Activated B cell treated with CpG ODN at 0.5 μM for 24 hours (primary cell): ENCODE measurements at regions of chr20 and their contacts with region 1.

Region 1: DNA sequence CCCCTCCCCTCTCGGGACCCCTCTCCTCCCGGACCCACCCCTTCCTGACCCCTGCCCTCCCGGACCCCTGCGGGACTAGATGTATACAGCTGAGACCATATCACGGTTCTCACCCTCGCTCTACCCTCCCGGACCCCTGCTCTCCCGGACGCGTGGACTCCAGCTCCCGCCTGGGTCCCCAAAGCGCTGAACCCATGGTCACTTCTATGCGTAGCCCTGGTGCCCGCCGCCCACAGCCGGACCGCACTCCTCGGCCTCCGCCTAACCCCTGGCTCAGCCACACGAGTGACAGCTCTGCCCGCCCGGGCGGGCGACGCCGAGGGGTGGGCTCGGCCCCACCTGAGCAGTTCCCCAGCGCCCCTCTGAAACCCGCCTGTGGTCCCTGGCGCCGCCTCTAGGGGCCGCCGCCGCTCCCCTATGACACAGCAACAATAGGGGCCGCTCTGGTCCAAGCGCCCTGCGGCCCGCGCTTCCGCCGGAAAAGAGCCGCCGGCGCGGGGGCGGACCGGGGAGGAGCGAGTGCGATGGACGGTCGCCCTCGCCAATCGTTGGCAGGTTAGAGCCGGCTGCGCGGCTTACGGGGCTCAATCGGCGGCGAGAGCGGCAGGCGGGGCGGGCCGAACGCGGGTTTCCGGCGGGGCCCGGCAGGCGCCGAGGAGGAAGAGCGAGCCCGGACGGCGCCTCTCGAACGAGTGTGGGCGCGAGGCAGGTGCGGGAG is at the start of gene ADRM1:
- DNase-seq: peak; percentile 99
- ATAC-seq: peak; percentile 86
- H3K4me3 Mint-ChIP-seq: peak within 1 kb of the TSS; percentile 92
- H3K27ac Mint-ChIP-seq: peak within 1 kb of the TSS; percentile 96
- H3K4me1 Mint-ChIP-seq: peaks cover 30% of the 10 kb centered on the region
- H3K27me3 Mint-ChIP-seq: no peaks in the 10 kb centered on the region
- CTCF ChIP-seq: peak; percentile 32
- total RNA-seq, gene ADRM1: 97.9 and 98.0 TPM in 2 replicates

Region 2: GRCh38 chr20:62065669-62066338 is 236.7 kb before region 1 on chr20 and contains the start of gene TAF4:
- CTCF ChIA-PET with region 1: no interaction called
- POLR2A ChIA-PET with region 1: no interaction called
- intact Hi-C with region 1: loop called (anchors 5 kb)
- DNase-seq: peak; percentile 83
- ATAC-seq: peak; percentile 79
- H3K4me3 Mint-ChIP-seq: peak within 1 kb of the TSS; percentile 88
- H3K27ac Mint-ChIP-seq: peak within 1 kb of the TSS; percentile 89
- H3K4me1 Mint-ChIP-seq: peaks cover 49% of the 10 kb centered on the region
- H3K27me3 Mint-ChIP-seq: peaks cover 3% of the 10 kb centered on the region
- CTCF ChIP-seq: no peak
- total RNA-seq, gene TAF4: 24.9 and 26.9 TPM in 2 replicates

Region 3: GRCh38 chr20:62339647-62340070 is 37.2 kb after region 1 on chr20:
- CTCF ChIA-PET with region 1: interaction called, 9 read pairs
- POLR2A ChIA-PET with region 1: interaction called, 10 read pairs
- intact Hi-C with region 1: loop called (anchors 1 kb)
- DNase-seq: peak; percentile 43
- ATAC-seq: peak; percentile 67
- H3K4me3 Mint-ChIP-seq: peak overlapping the region; percentile 86
- H3K27ac Mint-ChIP-seq: peak overlapping the region; percentile 92
- H3K4me1 Mint-ChIP-seq: peaks cover 55% of the 10 kb centered on the region
- H3K27me3 Mint-ChIP-seq: no peaks in the 10 kb centered on the region
- CTCF ChIP-seq: no peak

Region 4: GRCh38 chr20:62386383-62387218 is 84.1 kb after region 1 on chr20 and contains the start of gene RPS21:
- CTCF ChIA-PET with region 1: interaction called, 27 read pairs
- POLR2A ChIA-PET with region 1: interaction called, 21 read pairs
- intact Hi-C with region 1: loop called (anchors 1 kb)
- DNase-seq: peak; percentile 91
- ATAC-seq: peak; percentile 87
- H3K4me3 Mint-ChIP-seq: peak within 1 kb of the TSS; percentile 89
- H3K27ac Mint-ChIP-seq: peak within 1 kb of the TSS; percentile 80
- H3K4me1 Mint-ChIP-seq: peaks cover 48% of the 10 kb centered on the region
- H3K27me3 Mint-ChIP-seq: no peaks in the 10 kb centered on the region
- CTCF ChIP-seq: no peak
- total RNA-seq, gene RPS21: 2,912 and 3,555 TPM in 2 replicates

Region 5: GRCh38 chr20:62616728-62617621 is 314.5 kb after region 1 on chr20:
- CTCF ChIA-PET with region 1: interaction called, 3 read pairs
- POLR2A ChIA-PET with region 1: no interaction called
- intact Hi-C with region 1: loop called (anchors 1 kb)
- DNase-seq: peak; percentile 73
- ATAC-seq: peak; percentile 61
- H3K4me3 Mint-ChIP-seq: peak overlapping the region; percentile 73
- H3K27ac Mint-ChIP-seq: peak overlapping the region; percentile 93
- H3K4me1 Mint-ChIP-seq: peaks cover 45% of the 10 kb centered on the region
- H3K27me3 Mint-ChIP-seq: no peaks in the 10 kb centered on the region
- CTCF ChIP-seq: peak; percentile 84

Region 6: GRCh38 chr20:62808211-62808865 is 505.8 kb after region 1 on chr20:
- CTCF ChIA-PET with region 1: no interaction called
- POLR2A ChIA-PET with region 1: interaction called, 3 read pairs
- intact Hi-C with region 1: loop called (anchors 1 kb)
- DNase-seq: peak; percentile 75
- ATAC-seq: peak; percentile 56
- H3K4me3 Mint-ChIP-seq: peak overlapping the region; percentile 48
- H3K27ac Mint-ChIP-seq: peak overlapping the region; percentile 69
- H3K4me1 Mint-ChIP-seq: peaks cover 31% of the 10 kb centered on the region
- H3K27me3 Mint-ChIP-seq: no peaks in the 10 kb centered on the region
- CTCF ChIP-seq: peak; percentile 48

Region 7: GRCh38 chr20:62914970-62915457 is 612.5 kb after region 1 on chr20:
- CTCF ChIA-PET with region 1: no interaction called
- POLR2A ChIA-PET with region 1: no interaction called
- intact Hi-C with region 1: no loop called
- DNase-seq: no peak
- ATAC-seq: no peak
- H3K4me3 Mint-ChIP-seq: no peak overlapping the region
- H3K27ac Mint-ChIP-seq: peak overlapping the region; percentile 56
- H3K4me1 Mint-ChIP-seq: peaks cover 60% of the 10 kb centered on the region
- H3K27me3 Mint-ChIP-seq: no peaks in the 10 kb centered on the region
- CTCF ChIP-seq: no peak

Region 8: DNA sequence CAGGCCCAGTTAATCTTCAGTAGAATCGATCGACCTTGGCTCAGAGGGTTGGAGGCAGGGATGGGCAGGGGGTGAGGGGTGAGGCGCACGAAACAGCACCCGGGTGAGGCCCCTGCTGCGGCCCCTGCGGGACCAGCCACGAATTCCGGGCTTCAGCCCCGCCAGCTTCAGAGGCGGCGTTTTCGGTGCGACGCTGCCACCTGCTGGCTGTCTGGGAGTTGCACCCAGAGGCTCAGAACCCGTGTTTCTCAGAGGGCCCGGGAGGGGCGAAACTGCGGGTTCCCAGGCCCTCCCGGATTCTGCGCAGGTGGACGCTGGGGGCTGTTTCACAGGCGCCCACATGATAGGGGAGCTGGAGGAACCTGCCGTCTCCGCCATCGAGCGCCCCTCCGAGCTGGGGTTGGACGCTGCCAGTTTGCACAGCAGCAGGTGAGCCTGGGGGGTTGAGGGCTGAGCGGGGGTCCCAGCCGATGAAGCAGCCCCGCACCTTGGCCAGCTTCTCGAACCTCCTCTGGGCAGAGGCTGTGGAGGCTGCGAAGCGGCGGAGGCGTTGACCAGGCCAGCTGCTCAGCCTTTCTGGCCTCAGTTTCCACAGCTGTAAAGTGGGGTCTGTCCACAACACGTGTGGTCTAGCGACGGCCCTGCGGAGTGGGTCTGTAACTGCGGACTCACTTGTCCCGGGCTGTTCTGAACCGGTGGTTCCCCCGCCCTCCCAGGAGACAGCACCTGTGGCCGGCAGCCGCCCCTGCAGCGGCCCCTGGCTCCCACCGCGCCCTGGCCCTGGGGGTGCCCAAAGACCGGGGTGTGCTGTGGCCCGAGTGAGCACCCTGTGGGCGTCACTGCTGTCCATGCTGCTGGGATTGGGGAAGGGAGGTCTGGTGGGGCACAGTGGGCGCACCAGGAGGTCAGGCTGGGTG is 706.8 kb after region 1 on chr20:
- CTCF ChIA-PET with region 1: no interaction called
- POLR2A ChIA-PET with region 1: no interaction called
- intact Hi-C with region 1: loop called (anchors 1 kb)
- DNase-seq: peak; percentile 86
- ATAC-seq: peak; percentile 86
- H3K4me3 Mint-ChIP-seq: peak overlapping the region; percentile 46
- H3K27ac Mint-ChIP-seq: no peak overlapping the region
- H3K4me1 Mint-ChIP-seq: peaks cover 26% of the 10 kb centered on the region
- H3K27me3 Mint-ChIP-seq: peaks cover 43% of the 10 kb centered on the region
- CTCF ChIP-seq: no peak